PC-9 (cell line): ENCODE measurements at regions of chr18 and their contacts with region 1.

Region 1: DNA sequence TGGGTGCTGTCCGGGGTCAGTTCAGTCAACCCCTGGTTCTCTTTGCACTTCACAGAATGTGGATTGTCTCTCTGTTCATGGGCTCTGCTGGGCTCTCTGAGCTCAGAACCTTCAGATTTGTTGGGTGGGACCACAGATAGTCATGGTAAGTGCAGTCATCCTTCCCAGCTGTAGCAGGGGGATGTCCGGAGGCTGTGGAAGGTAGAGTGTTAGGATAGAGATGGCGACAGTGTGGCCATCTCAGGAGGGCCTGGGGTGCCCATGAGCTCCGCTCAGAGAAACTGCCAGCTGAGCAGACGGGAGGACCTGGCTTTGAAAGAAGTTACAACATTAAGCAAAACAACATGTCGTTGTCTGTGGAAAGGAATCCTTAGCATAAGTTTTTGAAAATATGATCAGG is 149.8 kb downstream of the FAM210A start:
- DNase-seq: no peak
- H3K4me3 ChIP-seq: no peak overlapping the region
- H3K27ac ChIP-seq: no peak overlapping the region
- H3K4me1 ChIP-seq: no peaks in the 10 kb centered on the region
- H3K27me3 ChIP-seq: peaks cover 62% of the 10 kb centered on the region
- CTCF ChIP-seq: no peak

Region 2: DNA sequence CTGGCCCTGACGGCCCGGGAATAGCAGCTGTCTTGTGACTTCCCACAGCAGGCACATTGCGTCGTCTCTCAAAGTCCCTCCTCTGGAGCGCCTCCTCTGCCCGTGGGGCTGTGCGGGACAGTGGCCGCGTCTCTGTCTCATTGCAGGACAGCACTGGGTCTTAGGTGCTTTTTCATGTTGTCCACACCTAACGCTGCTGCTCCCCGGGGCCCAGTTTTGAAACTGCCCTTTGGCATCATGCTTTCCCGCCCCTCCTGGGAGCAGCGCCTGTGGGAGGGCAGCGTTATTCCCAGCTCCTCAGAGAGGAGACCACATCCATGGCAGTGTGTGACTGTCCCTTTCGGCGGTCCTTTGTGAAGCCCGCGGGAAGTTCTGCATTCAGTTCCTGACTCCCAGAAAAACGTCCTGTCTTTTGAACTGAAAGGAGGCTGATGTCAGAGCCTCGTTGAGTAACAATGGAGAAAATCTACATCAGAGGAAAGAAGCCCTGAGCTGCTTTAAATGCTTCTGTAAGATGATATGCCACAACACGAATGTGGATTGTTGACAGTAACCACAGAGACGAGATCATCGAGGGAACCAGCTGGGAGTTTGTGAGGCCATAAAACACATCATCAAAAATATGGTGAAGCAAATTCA is 76.3 kb before region 1 on chr18:
- CTCF ChIA-PET with region 1: no interaction called
- POLR2A ChIA-PET with region 1: no interaction called
- intact Hi-C with region 1: no loop called
- DNase-seq: no peak
- H3K4me3 ChIP-seq: no peak overlapping the region
- H3K27ac ChIP-seq: no peak overlapping the region
- H3K4me1 ChIP-seq: no peaks in the 10 kb centered on the region
- H3K27me3 ChIP-seq: peaks cover 67% of the 10 kb centered on the region
- CTCF ChIP-seq: no peak

Region 3: GRCh38 chr18:13735681-13736080 is 159.1 kb after region 1 on chr18:
- CTCF ChIA-PET with region 1: no interaction called
- POLR2A ChIA-PET with region 1: interaction called, 23 read pairs
- intact Hi-C with region 1: no loop called
- DNase-seq: no peak
- H3K4me3 ChIP-seq: no peak overlapping the region
- H3K27ac ChIP-seq: no peak overlapping the region
- H3K4me1 ChIP-seq: no peaks in the 10 kb centered on the region
- H3K27me3 ChIP-seq: no peaks in the 10 kb centered on the region
- CTCF ChIP-seq: no peak